Heart left ventricle (tissue), 16 donors: ENCODE measurements at regions of chr12 and their contacts with region 1.

Region 1: DNA sequence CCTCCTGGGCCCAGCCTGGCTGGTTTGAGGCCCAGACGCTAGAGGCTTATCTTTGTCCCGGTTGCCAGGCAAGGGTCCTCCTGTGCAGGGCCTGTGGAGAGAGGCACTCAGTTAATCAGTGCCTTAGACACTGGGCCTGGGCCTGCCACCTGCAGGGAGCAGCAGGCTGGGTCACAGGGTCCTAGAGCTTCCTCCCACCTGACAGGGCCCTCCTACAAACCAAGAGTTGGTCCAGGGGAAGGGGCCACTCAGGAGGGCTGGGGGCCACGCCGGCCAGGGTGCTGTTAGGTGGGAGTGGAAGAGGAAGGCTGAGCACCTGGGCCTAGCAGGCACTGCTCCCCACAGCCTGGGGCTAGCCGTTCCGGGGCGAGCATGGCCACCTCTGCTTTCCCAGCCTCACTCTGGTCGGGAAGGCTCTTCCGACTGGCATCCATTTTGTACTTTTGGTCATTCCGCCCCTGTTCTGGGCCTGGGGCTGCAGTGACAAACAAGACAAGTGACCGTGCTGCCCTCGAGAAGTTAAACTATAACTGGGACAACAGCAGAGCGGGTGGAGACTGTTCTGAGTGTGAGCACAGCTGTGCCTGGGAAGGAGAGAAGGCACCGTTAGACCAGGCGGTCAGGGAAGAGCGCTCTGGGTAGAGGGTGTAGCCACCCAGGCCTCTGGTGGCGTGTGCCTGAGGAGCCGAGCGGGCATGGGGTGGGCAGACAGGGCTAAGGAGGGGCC is 27.2 kb downstream of the FBRSL1 start:
- DNase-seq: no peak
- ATAC-seq: no peak
- H3K4me3 ChIP-seq: no peak overlapping the region
- H3K27ac ChIP-seq: no peak overlapping the region
- H3K4me1 ChIP-seq: peaks cover 0 to 43% (median 2%) of the 10 kb centered on the region in 12 donors
- H3K27me3 ChIP-seq: no peaks in the 10 kb centered on the region
- CTCF ChIP-seq: no peak
- POLR2A ChIP-seq: no peak

Region 2: DNA sequence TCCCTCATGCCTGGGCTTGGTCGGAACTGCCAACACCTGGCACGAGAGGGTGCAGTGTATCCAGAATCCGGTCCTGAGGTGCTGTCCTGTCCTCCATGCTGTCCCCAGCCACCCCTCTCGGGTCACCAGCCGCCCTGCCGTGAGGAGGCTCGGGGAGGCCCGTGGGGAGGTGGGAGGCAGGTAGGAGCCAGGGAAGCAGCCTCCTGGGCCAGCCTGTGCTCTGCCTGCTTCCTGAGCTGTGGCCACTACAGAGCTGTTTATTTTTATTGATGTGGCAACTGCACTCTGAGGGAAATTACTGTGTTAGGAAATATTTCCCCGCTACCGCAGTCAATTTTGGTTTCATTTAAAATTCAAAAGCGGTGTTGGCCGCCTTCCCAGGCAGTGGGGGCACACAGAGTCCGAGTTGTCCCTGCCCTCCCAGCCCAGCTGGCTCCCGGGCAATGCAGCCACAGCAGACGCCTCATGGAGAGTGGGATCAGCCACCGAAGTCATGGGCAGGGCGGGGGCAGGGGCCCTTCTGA is 354.6 kb before region 1 on chr12:
- intact Hi-C with region 1: loop called in 2 of 10 experiments (anchors 5 to 10 kb)
- DNase-seq: peak in 3 of 5 donors; percentile 21 to 61 (median 23)
- ATAC-seq: peak in 1 of 4 donors; percentile 27
- H3K4me3 ChIP-seq: peak overlapping the region in 1 of 12 donors; percentile 19
- H3K27ac ChIP-seq: no peak overlapping the region
- H3K4me1 ChIP-seq: peaks cover 0 to 13% (median 0%) of the 10 kb centered on the region in 12 donors
- H3K27me3 ChIP-seq: peaks cover 0 to 10% (median 5%) of the 10 kb centered on the region in 9 donors
- CTCF ChIP-seq: no peak
- POLR2A ChIP-seq: no peak

Region 3: DNA sequence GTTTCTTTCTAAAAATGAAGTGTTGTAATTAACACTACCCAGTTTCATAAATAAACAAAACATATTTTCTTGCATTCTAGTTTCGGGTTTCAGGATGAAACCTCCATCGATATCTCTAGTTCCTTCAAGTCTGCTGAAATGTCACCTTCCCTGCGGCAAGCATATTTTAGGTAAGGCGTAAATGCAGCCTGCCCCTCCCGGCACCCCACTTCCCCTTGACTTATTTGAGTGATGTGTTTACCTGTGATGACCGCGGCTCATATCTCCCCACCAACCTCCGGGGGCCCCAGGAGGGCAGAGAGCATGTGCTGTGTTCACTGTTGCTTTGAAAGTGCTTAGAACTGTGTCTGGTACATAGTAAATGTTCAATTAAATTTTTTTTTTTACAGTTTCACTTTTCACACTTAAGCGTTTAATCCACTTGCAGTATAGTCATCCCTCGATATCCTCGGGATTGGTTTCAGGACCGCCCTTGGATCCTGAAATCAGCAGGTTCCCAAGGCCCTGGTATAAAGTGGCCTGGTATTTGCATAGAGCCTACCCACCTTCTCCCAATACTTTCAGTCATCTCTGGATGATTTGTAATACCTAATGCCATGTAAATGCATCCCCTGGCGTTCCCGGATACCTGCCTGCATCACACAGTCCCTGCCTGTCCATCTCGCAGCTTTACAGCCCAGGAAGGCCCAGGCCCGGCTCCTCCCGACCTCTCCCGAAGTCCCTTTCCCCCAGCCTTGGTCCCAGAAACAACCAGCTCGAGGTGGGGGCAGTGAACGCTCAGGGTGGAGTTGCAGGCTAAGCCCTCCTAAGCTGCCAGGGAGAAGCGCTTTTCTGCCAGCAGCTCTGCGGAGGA is 67.4 kb before region 1 on chr12:
- intact Hi-C with region 1: no loop called
- DNase-seq: no peak
- ATAC-seq: no peak
- H3K4me3 ChIP-seq: no peak overlapping the region
- H3K27ac ChIP-seq: no peak overlapping the region
- H3K4me1 ChIP-seq: peaks cover 0 to 3% (median 0%) of the 10 kb centered on the region in 12 donors
- H3K27me3 ChIP-seq: peaks cover 0 to 72% (median 16%) of the 10 kb centered on the region in 9 donors
- CTCF ChIP-seq: no peak
- POLR2A ChIP-seq: no peak

Region 4: DNA sequence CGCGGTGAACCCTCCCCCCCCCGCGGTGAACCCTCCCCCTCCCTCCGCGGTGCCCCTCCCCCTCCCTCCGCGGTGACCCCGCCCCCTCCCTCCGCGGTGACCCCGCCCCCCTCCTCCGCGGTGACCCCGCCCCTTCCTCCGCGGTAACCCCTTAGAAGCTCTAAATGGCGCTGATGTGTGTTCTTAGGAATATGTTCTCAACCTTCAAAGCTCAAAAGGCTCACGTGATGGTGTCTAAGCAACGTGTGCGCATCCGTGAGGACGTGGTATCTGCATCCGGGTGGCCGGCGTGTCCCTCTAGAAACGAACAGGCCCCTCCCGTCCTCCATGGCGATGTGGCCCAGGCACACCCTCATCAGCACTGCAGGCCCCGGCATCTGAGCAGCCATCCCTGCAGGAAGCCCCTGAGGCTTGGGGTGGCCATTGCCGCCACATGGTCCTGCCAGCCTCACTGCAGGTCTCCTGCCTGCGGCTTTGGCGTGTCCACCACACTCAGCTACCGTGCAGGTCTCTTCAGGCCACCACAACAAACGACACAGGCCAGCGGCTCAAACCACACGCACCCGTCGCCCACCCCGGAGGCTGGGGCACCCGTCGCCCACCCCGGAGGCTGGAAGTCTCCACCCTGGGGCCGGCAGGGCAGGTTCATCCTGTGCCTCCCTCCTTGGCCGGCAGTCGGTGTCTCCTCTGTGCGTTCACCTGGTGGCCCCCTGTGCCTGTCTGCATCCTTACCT is 41.7 kb before region 1 on chr12:
- intact Hi-C with region 1: no loop called
- DNase-seq: peak in 2 of 5 donors; percentile 24 to 51
- ATAC-seq: peak in 1 of 4 donors; percentile 2
- H3K4me3 ChIP-seq: no peak overlapping the region
- H3K27ac ChIP-seq: no peak overlapping the region
- H3K4me1 ChIP-seq: peaks cover 0 to 5% (median 0%) of the 10 kb centered on the region in 12 donors
- H3K27me3 ChIP-seq: peaks cover 0 to 5% (median 0%) of the 10 kb centered on the region in 9 donors
- CTCF ChIP-seq: no peak
- POLR2A ChIP-seq: no peak